ENCODE measurements at regions of chr4 and their contacts with region 1.

Region 1: DNA sequence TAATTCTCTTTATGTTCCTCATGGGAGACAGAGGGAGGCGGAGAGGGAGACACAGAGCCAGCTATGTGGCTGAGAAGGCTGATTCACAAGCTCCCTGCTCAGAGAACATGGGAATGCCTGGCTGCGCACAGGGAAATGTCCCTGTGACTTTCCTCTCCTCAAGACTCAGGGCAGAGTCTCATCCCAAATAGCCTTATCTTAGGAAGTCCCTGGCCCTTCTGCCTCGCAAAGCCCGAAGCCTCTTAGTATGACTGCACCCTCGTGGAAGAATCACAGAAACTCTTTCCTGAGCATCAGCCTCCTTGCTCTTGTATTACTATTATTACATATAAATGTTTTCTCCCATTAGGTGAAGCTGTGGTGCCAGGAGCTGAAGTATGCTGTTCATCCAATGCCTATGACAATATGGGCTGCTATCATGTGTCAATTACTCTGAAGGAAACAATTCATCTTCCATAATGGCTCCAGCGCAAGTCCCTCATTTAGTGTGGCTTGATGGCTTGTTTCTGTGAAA is 230.5 kb downstream of the MGST2 start:
- DNase-seq: no peak
- H3K4me3 ChIP-seq: no peak overlapping the region
- H3K27me3 ChIP-seq: no peaks in the 10 kb centered on the region; the same call in 1 of the 2 replicates
- CTCF ChIP-seq: no peak

Region 2: GRCh38 chr4:140046543-140046942 is 150.4 kb after region 1 on chr4:
- CTCF ChIA-PET with region 1: no interaction called
- POLR2A ChIA-PET with region 1: interaction called, 17 read pairs
- DNase-seq: no peak
- H3K4me3 ChIP-seq: no peak overlapping the region
- H3K27me3 ChIP-seq: no peaks in the 10 kb centered on the region
- CTCF ChIP-seq: no peak